ENCODE measurements at regions of chr9 and their contacts with region 1.

Region 1: DNA sequence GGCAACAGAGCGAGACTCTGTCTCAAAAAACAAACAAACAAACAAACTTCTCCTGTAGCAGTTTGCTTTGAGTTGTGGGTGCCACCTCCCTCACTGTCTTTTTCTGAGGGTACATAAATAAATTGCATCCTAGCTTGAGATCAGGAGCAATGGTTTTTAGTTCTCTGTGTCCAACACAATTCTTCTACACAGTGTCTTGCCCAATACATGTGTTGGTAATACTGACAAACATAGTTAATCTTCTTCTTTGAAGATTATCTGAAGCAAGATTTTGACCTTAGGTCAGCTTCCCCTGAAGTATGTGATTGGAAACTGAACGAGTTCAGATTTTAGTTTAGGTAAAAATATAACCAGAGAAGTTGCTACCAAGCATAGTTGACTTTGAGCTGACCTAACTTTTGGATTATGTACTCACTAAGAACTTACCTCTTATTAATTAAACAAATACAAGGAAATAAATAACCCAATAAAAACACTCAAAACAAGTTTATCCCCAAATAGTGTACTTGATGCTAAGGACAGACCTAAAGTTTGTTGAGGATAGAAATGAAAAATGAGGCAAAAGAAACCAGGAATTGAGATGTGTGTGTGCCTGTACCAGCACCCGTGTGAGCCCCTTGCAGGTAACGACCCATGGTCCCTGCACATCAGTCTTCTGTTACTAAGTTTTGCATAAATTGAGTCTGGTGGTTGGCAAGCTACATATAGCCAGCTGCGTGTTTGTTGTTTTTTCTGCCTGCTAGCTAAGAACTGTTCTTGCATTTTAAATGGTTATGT is 16.2 kb downstream of the TJP2 start:
- DNase-seq: peak; percentile 73
- H3K4me3 ChIP-seq: peak overlapping the region; percentile 56
- H3K27ac ChIP-seq: peak overlapping the region; percentile 66
- H3K4me1 ChIP-seq: peaks cover 54% of the 10 kb centered on the region
- CTCF ChIP-seq: no peak

Region 2: DNA sequence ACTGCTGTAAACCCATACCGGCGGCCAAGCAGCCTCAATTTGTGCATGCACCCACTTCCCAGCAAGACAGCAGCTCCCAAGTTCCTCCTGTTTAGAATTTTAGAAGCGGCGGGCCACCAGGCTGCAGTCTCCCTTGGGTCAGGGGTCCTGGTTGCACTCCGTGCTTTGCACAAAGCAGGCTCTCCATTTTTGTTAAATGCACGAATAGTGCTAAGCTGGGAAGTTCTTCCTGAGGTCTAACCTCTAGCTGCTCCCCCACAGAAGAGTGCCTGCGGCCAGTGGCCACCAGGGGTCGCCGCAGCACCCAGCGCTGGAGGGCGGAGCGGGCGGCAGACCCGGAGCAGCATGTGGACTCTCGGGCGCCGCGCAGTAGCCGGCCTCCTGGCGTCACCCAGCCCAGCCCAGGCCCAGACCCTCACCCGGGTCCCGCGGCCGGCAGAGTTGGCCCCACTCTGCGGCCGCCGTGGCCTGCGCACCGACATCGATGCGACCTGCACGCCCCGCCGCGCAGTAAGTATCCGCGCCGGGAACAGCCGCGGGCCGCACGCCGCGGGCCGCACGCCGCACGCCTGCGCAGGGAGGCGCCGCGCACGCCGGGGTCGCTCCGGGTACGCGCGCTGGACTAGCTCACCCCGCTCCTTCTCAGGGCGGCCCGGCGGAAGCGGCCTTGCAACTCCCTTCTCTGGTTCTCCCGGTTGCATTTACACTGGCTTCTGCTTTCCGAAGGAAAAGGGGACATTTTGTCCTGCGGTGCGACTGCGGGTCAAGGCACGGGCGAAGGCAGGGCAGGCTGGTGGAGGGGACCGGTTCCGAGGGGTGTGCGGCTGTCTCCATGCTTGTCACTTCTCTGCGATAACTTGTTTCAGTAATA is 154.6 kb before region 1 on chr9 and contains the start of gene FXN:
- CTCF ChIA-PET with region 1: interaction called, 3 read pairs
- POLR2A ChIA-PET with region 1: interaction called, 3 read pairs
- intact Hi-C with region 1: loop called (anchors 5 kb)
- DNase-seq: peak; percentile 87
- H3K4me3 ChIP-seq: peak within 1 kb of the TSS; percentile 83
- H3K27ac ChIP-seq: peak within 1 kb of the TSS; percentile 57
- H3K4me1 ChIP-seq: no peaks in the 10 kb centered on the region
- CTCF ChIP-seq: peak; percentile 97
- total RNA-seq, gene FXN: 5.6 and 6.9 TPM in 2 replicates

Region 3: GRCh38 chr9:69056191-69056815 is 134.0 kb before region 1 on chr9:
- CTCF ChIA-PET with region 1: interaction called, 3 read pairs
- POLR2A ChIA-PET with region 1: interaction called, 6 read pairs
- intact Hi-C with region 1: loop called (anchors 1 kb)
- DNase-seq: no peak
- H3K4me3 ChIP-seq: no peak overlapping the region
- H3K27ac ChIP-seq: no peak overlapping the region
- H3K4me1 ChIP-seq: no peaks in the 10 kb centered on the region
- CTCF ChIP-seq: no peak

Region 4: GRCh38 chr9:69121828-69122548 is 68.3 kb before region 1 on chr9:
- CTCF ChIA-PET with region 1: interaction called, 3 read pairs
- POLR2A ChIA-PET with region 1: no interaction called
- intact Hi-C with region 1: loop called (anchors 5 kb)
- DNase-seq: peak; percentile 90
- H3K4me3 ChIP-seq: peak overlapping the region; percentile 65
- H3K27ac ChIP-seq: peak overlapping the region; percentile 60
- H3K4me1 ChIP-seq: peaks cover 19% of the 10 kb centered on the region
- CTCF ChIP-seq: peak; percentile 62

Region 5: DNA sequence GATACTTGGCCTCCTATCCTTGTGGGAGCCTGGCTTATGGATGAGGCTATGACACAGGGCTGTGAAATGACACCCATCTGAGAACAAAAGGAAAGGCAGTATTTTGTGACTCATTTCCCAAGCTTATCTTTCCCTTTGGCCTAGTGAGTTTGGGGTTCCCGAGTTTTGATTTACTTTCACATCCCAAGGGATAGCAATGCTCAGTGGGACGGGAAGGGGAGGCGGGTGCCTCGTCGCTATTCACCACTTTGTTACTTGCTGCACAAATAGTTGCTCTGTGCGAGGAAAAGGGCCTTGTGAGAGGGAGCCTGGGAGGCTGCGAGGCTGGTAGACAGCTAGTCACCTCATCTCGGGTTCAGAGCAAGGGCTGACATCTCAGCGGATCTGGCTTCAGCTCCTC is 75.6 kb after region 1 on chr9:
- CTCF ChIA-PET with region 1: no interaction called
- POLR2A ChIA-PET with region 1: no interaction called
- intact Hi-C with region 1: no loop called
- DNase-seq: no peak
- H3K4me3 ChIP-seq: no peak overlapping the region
- H3K27ac ChIP-seq: no peak overlapping the region
- H3K4me1 ChIP-seq: no peaks in the 10 kb centered on the region
- CTCF ChIP-seq: no peak

Measured in OCI-LY7 (cell line).